Activated CD8-positive, alpha-beta T cell treated with anti-CD3 and anti-CD28 coated beads for 36 hours (primary cell): ENCODE measurements at regions of chr1 and their contacts with region 1.

Region 1: DNA sequence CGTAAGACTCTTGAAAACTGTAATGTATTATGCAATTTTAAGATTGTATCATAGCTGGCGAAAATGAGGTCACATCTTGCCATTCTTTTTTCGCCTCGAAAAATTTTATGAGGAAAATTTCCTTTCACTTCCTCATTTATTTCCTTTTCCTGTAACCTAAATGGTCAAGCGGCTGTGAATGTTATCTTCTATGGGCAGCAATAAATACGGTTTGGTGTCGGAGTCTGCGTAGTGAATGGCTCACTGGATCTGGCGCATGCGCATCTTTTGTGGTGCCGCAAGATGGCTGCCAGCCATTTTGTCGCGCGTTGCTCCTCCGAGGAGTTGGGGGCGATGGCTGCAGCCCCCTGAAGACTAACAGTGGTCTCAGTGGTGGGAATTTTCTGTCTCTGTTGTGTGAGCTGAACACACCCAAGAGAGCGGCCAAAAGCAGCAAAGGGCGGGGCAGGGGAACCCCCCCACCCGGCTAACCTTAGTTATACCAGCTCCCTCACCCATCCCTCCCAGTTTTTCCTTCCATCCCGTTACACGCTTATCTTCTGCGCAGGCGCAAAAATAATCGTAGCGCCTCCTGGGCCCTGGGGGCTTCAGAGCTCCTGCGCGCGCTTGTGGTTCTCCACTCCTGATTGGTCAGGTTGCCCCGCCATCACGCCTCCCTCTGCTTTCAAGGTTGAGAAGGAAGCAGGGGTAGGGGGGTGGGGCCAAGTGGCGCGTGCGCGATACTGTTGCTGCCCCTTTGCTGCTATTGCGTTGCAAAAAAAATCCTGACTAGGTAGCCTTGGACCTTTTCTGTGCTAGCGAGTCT is at the start of gene RPRD2:
- DNase-seq: peak; percentile 100
- ATAC-seq: peak; percentile 97
- H3K4me3 Mint-ChIP-seq: peak within 1 kb of the TSS; percentile 83
- H3K27ac Mint-ChIP-seq: peak within 1 kb of the TSS; percentile 98
- H3K4me1 Mint-ChIP-seq: peaks cover 19% of the 10 kb centered on the region
- H3K27me3 Mint-ChIP-seq: no peaks in the 10 kb centered on the region
- CTCF ChIP-seq: no peak
- total RNA-seq, gene RPRD2: 17.6 to 19.4 TPM

Region 2: GRCh38 chr1:150429805-150430204 is 66.2 kb after region 1 on chr1:
- CTCF ChIA-PET with region 1: no interaction called
- POLR2A ChIA-PET with region 1: no interaction called
- intact Hi-C with region 1: loop called (anchors 10 kb)
- DNase-seq: no peak
- ATAC-seq: peak; percentile 47
- H3K4me3 Mint-ChIP-seq: no peak overlapping the region
- H3K27ac Mint-ChIP-seq: no peak overlapping the region
- H3K4me1 Mint-ChIP-seq: peaks cover 10% of the 10 kb centered on the region
- H3K27me3 Mint-ChIP-seq: no peaks in the 10 kb centered on the region
- CTCF ChIP-seq: peak; percentile 45